ENCODE measurements at regions of chr2 and their contacts with region 1.

Region 1: GRCh38 chr2:64273524-64274398 is 129.5 kb upstream of the PELI1 start:
- DNase-seq: no peak
- ATAC-seq: no peak
- H3K4me3 Mint-ChIP-seq: no peak overlapping the region
- H3K27ac Mint-ChIP-seq: peak overlapping the region; percentile 30
- H3K4me1 Mint-ChIP-seq: peaks cover 27% of the 10 kb centered on the region
- H3K27me3 Mint-ChIP-seq: no peaks in the 10 kb centered on the region
- CTCF ChIP-seq: no peak

Region 2: GRCh38 chr2:63588385-63589147 is 685.2 kb before region 1 on chr2 and contains the starts of genes MDH1 and WDPCP:
- CTCF ChIA-PET with region 1: no interaction called
- POLR2A ChIA-PET with region 1: no interaction called
- intact Hi-C with region 1: no loop called
- DNase-seq: peak; percentile 80
- ATAC-seq: peak; percentile 86
- H3K4me3 Mint-ChIP-seq: peak within 1 kb of the TSS; percentile 97
- H3K27ac Mint-ChIP-seq: peak within 1 kb of the TSS; percentile 97
- H3K4me1 Mint-ChIP-seq: peaks cover 47% of the 10 kb centered on the region
- H3K27me3 Mint-ChIP-seq: no peaks in the 10 kb centered on the region
- CTCF ChIP-seq: no peak
- total RNA-seq, gene MDH1: 117 and 120 TPM in 2 replicates
- total RNA-seq, gene WDPCP: 10.0 and 12.9 TPM in 2 replicates

Region 3: DNA sequence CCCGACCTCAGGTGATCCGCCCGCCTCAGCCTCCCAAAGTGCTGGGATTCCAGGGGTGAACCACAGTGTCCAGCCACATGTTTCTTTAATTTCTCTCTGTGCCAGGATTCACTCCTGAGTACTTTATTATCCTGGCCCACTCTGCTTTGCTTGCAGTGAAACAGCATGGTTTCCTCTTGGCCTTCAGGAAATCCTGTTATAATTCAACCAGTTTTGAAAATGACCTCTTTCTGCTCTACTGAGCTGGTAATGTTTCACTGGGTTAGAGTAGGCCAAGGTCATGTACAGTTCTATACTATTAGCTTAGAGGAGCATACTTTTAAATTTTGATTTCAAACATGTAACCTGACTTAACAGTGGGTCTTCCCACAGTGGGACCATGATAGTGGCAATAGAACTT is 39.0 kb before region 1 on chr2:
- CTCF ChIA-PET with region 1: no interaction called
- POLR2A ChIA-PET with region 1: no interaction called
- intact Hi-C with region 1: loop called (anchors 5 kb)
- DNase-seq: no peak
- ATAC-seq: no peak
- H3K4me3 Mint-ChIP-seq: no peak overlapping the region
- H3K27ac Mint-ChIP-seq: no peak overlapping the region
- H3K4me1 Mint-ChIP-seq: peaks cover 10% of the 10 kb centered on the region
- H3K27me3 Mint-ChIP-seq: no peaks in the 10 kb centered on the region
- CTCF ChIP-seq: no peak

Region 4: GRCh38 chr2:64260817-64261216 is 12.9 kb before region 1 on chr2:
- CTCF ChIA-PET with region 1: no interaction called
- POLR2A ChIA-PET with region 1: interaction called, 3 read pairs
- intact Hi-C with region 1: loop called (anchors 1 kb)
- DNase-seq: peak; percentile 46
- ATAC-seq: peak; percentile 92
- H3K4me3 Mint-ChIP-seq: peak overlapping the region; percentile 70
- H3K27ac Mint-ChIP-seq: peak overlapping the region; percentile 92
- H3K4me1 Mint-ChIP-seq: peaks cover 41% of the 10 kb centered on the region
- H3K27me3 Mint-ChIP-seq: no peaks in the 10 kb centered on the region
- CTCF ChIP-seq: no peak